Mammary epithelial cell (primary cell): ENCODE measurements at regions of chr3 and their contacts with region 1.

Region 1: DNA sequence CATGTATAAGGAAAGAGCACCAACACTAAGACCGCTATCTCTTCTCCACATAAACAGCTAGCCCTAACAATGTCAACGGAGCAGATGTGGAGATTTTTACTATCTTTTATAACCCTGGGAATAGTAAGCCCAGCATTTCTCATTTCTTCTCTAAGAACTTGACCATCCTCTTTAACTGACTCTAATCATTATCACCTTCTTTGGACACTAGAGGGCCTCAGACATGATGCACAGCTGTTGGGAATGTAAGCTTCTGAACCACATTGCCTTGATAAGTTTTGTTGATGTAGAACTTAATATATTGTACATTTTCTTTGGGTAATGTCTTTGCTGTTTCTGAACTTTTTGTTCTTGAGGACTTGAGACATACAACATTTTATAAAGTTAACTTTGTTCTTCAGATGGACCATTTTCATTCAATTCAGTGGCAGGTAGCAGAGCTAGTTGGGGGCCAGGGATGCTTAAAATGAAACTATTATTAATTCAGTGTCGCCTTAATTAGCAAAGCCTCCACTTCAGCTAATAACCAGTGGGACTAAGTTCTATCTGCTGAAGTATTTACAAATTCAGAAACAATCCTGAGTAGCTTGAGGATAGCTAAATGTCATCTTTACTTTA is 9.6 kb upstream of the TAGLN3 start:
- DNase-seq: peak; percentile 55
- H3K4me3 ChIP-seq: no peak overlapping the region
- H3K27ac ChIP-seq: no peak overlapping the region
- H3K4me1 ChIP-seq: no peaks in the 10 kb centered on the region
- H3K27me3 ChIP-seq: no peaks in the 10 kb centered on the region
- CTCF ChIP-seq: peak; percentile 79 to 82

Region 2: GRCh38 chr3:112013058-112013783 is 24.1 kb after region 1 on chr3:
- CTCF ChIA-PET with region 1: interaction called, 6 read pairs
- dilution Hi-C with region 1: no loop called
- in situ Hi-C with region 1: no loop called
- intact Hi-C with region 1: loop called (anchors 1 kb)
- DNase-seq: peak; percentile 62
- H3K4me3 ChIP-seq: no peak overlapping the region
- H3K27ac ChIP-seq: no peak overlapping the region
- H3K4me1 ChIP-seq: no peaks in the 10 kb centered on the region
- H3K27me3 ChIP-seq: no peaks in the 10 kb centered on the region
- CTCF ChIP-seq: peak; percentile 83 to 86

Region 3: GRCh38 chr3:112111785-112112402 is 122.7 kb after region 1 on chr3:
- CTCF ChIA-PET with region 1: interaction called, 11 read pairs
- dilution Hi-C with region 1: no loop called
- in situ Hi-C with region 1: no loop called
- intact Hi-C with region 1: loop called (anchors 5 kb)
- DNase-seq: peak; percentile 71
- H3K4me3 ChIP-seq: no peak overlapping the region
- H3K27ac ChIP-seq: no peak overlapping the region
- H3K4me1 ChIP-seq: no peaks in the 10 kb centered on the region
- H3K27me3 ChIP-seq: no peaks in the 10 kb centered on the region
- CTCF ChIP-seq: peak; percentile 88